ENCODE measurements at regions of chr3 and their contacts with region 1.

Region 1: GRCh38 chr3:107598926-107599771 is 76.4 kb downstream of the BBX start:
- DNase-seq: peak; percentile 53
- ATAC-seq: peak; percentile 91
- H3K4me3 Mint-ChIP-seq: peak overlapping the region; percentile 92
- H3K27ac Mint-ChIP-seq: peak overlapping the region; percentile 96
- H3K4me1 Mint-ChIP-seq: peaks cover 29% of the 10 kb centered on the region
- H3K27me3 Mint-ChIP-seq: no peaks in the 10 kb centered on the region

Region 2: DNA sequence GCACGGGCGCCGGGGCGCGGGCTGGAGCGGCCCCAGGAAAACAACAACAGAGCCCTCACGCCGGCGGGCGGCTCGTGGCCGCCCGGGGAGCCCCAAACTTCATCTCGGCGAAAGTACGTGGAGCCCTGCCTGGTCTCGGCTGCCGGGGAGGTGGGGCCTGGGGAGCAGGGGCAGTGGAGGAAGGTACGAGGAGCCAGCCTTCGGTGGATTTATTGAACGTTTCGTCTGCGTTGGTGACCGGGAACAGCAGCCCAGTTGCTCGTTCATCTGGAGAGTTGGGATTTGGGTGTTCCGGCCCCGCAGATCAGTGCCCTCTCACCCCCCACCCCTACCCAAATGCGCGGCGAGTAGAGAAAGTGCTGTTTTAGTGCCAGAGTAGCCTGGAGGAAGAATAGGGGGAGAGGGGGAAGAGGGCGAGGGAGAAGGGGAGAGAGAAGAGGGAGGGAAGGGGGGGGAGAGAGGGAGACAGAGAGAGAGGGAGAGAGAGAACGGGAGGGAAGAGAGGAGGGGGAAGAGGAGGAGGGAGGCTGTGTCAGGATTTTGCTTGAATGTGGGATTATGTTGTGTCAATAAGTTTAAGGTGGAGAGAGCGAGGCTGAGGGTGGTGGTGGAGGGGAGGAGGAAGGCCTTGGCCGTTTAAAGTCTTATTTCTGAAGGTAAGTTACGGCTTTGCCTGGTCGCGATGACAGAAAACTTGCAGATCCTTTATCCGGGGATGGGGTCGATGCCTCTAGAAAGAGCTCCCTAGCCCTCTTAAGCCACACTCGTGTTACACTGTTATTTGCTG is 75.4 kb before region 1 on chr3:
- POLR2A ChIA-PET with region 1: interaction called, 12 read pairs
- DNase-seq: peak; percentile 75
- ATAC-seq: no peak
- H3K4me3 Mint-ChIP-seq: peak overlapping the region; percentile 97
- H3K27ac Mint-ChIP-seq: peak overlapping the region; percentile 96
- H3K4me1 Mint-ChIP-seq: peaks cover 21% of the 10 kb centered on the region
- H3K27me3 Mint-ChIP-seq: no peaks in the 10 kb centered on the region

Region 3: DNA sequence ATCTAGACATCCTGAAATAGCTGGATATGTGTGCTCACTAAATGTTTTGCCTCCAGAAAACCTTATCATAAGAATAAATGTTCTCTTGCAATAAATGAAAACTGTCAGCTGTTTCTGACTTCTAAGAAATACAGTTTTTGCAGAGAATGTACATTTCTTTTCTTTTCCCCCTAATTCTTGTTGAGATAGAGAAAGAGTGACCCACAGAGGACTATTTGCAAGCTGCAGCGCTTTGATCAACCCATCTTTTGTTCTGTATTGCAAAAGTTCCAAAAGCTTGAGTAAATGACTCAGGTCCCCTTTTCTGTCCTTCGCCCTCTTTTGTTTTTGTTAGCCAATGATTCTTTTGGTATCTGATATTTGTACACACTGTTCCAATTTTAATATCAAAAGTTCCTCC is 65.5 kb after region 1 on chr3:
- POLR2A ChIA-PET with region 1: no interaction called
- DNase-seq: no peak
- ATAC-seq: no peak
- H3K4me3 Mint-ChIP-seq: no peak overlapping the region
- H3K27ac Mint-ChIP-seq: no peak overlapping the region
- H3K4me1 Mint-ChIP-seq: peaks cover 15% of the 10 kb centered on the region
- H3K27me3 Mint-ChIP-seq: no peaks in the 10 kb centered on the region